Transverse colon (tissue), 4 donors: ENCODE measurements at regions of chr21 and their contacts with region 1.

Region 1: DNA sequence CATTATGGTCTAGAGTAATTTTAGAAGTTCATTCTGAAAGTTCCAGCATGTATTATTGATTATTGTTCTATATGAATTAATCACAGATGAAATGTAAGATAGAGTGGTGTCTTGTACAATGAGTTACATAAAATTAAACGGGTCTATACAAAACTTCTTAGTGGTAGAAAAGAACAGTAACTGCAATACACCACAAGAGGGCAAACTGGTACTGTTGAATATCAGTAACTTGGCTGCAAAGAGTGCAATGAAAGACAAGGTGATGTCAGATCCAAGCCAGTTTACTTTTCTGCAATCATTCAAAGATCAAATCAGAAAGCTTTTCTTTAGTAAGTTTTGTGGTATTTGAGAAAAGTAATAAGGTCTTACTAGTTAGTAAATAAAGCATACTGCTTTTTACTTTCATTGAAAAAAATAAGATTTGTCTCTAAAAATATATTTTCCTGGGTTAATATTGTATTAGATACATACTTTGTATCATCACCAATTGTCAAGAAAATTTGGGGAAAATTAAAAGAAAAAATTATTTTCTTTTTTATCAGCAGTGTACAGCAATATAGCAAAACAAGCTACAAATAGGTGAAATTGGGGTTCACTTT is 66.4 kb upstream of the BTG3 start:
- DNase-seq: no peak
- H3K4me3 ChIP-seq: no peak overlapping the region
- H3K27ac ChIP-seq: no peak overlapping the region
- H3K4me1 ChIP-seq: no peaks in the 10 kb centered on the region
- H3K27me3 ChIP-seq: no peaks in the 10 kb centered on the region
- CTCF ChIP-seq: peak; percentile 79 to 85 (median 82)
- EP300 ChIP-seq: no peak
- POLR2A ChIP-seq: no peak

Region 2: GRCh38 chr21:17903029-17903806 is 224.1 kb after region 1 on chr21:
- in situ Hi-C with region 1: loop called in 3 of 4 experiments (anchors 5 to 25 kb)
- intact Hi-C with region 1: no loop called
- DNase-seq: no peak
- H3K4me3 ChIP-seq: no peak overlapping the region
- H3K27ac ChIP-seq: no peak overlapping the region
- H3K4me1 ChIP-seq: no peaks in the 10 kb centered on the region
- H3K27me3 ChIP-seq: no peaks in the 10 kb centered on the region
- CTCF ChIP-seq: peak in 3 of 5 experiments; percentile 25 to 33 (median 31)
- EP300 ChIP-seq: no peak
- POLR2A ChIP-seq: no peak

Region 3: GRCh38 chr21:17911628-17912027 is 232.5 kb after region 1 on chr21:
- in situ Hi-C with region 1: loop called in 3 of 4 experiments (anchors 10 to 25 kb)
- intact Hi-C with region 1: no loop called
- DNase-seq: no peak
- H3K4me3 ChIP-seq: no peak overlapping the region
- H3K27ac ChIP-seq: no peak overlapping the region
- H3K4me1 ChIP-seq: no peaks in the 10 kb centered on the region
- H3K27me3 ChIP-seq: no peaks in the 10 kb centered on the region
- CTCF ChIP-seq: no peak
- EP300 ChIP-seq: no peak
- POLR2A ChIP-seq: no peak

Region 4: DNA sequence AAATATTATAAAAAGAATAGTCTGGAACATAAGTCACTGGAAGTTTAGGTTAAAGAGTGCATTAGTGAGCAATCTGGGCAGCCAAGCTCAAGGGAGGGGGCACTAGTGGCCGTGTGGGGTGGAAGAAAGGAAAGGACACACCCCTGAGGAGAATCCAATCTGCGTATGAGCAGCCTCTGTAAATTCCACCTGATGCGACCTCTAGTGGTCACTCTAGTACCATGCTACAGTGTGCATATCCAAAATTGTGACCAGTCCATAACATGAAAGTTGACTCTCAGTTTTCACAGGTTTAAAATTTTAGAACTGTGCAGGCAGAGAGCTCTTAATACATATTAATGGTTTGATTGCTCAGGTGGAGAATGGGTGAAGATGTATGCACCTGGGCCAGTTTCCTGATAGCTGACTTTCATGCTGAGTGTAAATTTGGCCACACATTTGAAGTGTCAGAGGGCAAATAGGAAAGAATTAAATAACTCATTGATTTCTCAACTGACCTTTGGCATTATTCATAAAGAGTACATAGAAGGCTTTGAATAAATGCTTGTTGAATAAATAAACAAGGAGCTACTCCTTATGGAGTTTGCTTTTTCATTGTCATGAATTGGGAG is 246.0 kb after region 1 on chr21:
- in situ Hi-C with region 1: loop called in 1 of 4 experiments (anchors 25 kb)
- intact Hi-C with region 1: loop called (anchors 5 kb)
- DNase-seq: peak; percentile 42
- H3K4me3 ChIP-seq: no peak overlapping the region
- H3K27ac ChIP-seq: no peak overlapping the region
- H3K4me1 ChIP-seq: no peaks in the 10 kb centered on the region
- H3K27me3 ChIP-seq: no peaks in the 10 kb centered on the region
- CTCF ChIP-seq: peak; percentile 67 to 89 (median 84)
- EP300 ChIP-seq: no peak
- POLR2A ChIP-seq: no peak